ENCODE measurements at regions of chr1 and their contacts with region 1.

Region 1: GRCh38 chr1:160997323-160998038 is 23.5 kb downstream of the F11R start:
- DNase-seq: peak in 4 of 5 donors; percentile 14 to 67 (median 33)
- H3K4me3 ChIP-seq: no peak overlapping the region
- H3K4me3 Mint-ChIP-seq: no peak overlapping the region
- H3K27ac ChIP-seq: no peak overlapping the region
- H3K27ac Mint-ChIP-seq: peak overlapping the region in 7 of 8 donors; percentile 19 to 80 (median 47)
- H3K4me1 ChIP-seq: no peaks in the 10 kb centered on the region
- H3K4me1 Mint-ChIP-seq: peaks cover 4 to 6% (median 5%) of the 10 kb centered on the region in 3 donors
- H3K27me3 ChIP-seq: no peaks in the 10 kb centered on the region
- H3K27me3 Mint-ChIP-seq: no peaks in the 10 kb centered on the region

Region 2: GRCh38 chr1:161013488-161014230 is 16.2 kb after region 1 on chr1:
- CTCF ChIA-PET with region 1: interaction called, 26 read pairs
- POLR2A ChIA-PET with region 1: interaction called, 3 read pairs
- DNase-seq: peak; percentile 39 to 76 (median 60)
- H3K4me3 ChIP-seq: peak overlapping the region; percentile 65
- H3K4me3 Mint-ChIP-seq: peak overlapping the region; percentile 67 to 90 (median 84)
- H3K27ac ChIP-seq: peak overlapping the region; percentile 71
- H3K27ac Mint-ChIP-seq: peak overlapping the region; percentile 90 to 99 (median 96)
- H3K4me1 ChIP-seq: peaks cover 34% of the 10 kb centered on the region
- H3K4me1 Mint-ChIP-seq: peaks cover 21 to 46% (median 27%) of the 10 kb centered on the region in 3 donors
- H3K27me3 ChIP-seq: no peaks in the 10 kb centered on the region
- H3K27me3 Mint-ChIP-seq: no peaks in the 10 kb centered on the region

Region 3: DNA sequence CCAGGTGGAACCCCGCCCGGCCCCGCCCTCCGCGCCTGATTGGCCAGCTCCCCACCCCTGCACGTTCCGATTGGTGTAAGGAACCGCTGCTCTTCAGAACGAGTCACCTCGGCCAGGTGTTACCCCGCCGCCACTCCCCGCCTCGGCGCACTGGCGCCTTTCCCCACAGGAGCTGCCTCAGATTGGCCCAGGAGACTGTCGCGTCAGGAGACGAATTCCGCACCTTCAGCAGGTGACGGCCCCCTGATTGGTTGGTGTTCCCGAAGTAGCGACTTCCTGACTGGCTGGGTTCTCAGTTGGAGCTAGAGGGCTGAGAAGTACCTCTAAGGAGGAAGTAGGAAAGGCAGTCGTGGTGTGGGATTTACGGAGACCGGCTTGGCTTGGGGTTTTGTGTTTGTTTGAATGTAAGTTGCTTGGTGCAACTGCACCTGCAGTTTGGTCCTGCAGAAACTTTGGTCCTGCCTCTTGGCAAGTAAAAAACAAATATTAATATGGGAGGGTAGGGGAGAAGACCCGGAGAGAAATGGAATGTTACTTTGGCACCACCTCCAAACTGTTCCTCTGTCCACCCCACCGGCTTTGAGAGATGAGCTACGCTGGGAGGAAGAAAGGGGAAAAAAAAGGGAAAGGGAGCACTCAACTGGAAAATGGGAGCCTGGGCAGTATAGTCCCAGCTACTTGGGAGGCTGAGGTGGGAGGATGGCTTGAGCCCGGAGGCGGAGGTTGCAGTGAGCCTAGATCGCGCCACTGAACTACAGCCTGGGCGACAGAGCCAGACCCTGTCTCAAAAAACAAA is 23.9 kb after region 1 on chr1:
- CTCF ChIA-PET with region 1: interaction called, 26 read pairs
- POLR2A ChIA-PET with region 1: no interaction called
- DNase-seq: peak; percentile 85 to 95 (median 91)
- H3K4me3 ChIP-seq: peak overlapping the region; percentile 99
- H3K4me3 Mint-ChIP-seq: peak overlapping the region; percentile 85 to 94 (median 91)
- H3K27ac ChIP-seq: peak overlapping the region; percentile 71
- H3K27ac Mint-ChIP-seq: peak overlapping the region; percentile 66 to 97 (median 95)
- H3K4me1 ChIP-seq: peaks cover 26% of the 10 kb centered on the region
- H3K4me1 Mint-ChIP-seq: peaks cover 19 to 60% (median 40%) of the 10 kb centered on the region in 3 donors
- H3K27me3 ChIP-seq: no peaks in the 10 kb centered on the region
- H3K27me3 Mint-ChIP-seq: no peaks in the 10 kb centered on the region

Region 4: GRCh38 chr1:161032409-161032808 is 34.9 kb after region 1 on chr1:
- CTCF ChIA-PET with region 1: interaction called, 16 read pairs
- POLR2A ChIA-PET with region 1: no interaction called
- DNase-seq: no peak
- H3K4me3 ChIP-seq: no peak overlapping the region
- H3K4me3 Mint-ChIP-seq: no peak overlapping the region
- H3K27ac ChIP-seq: no peak overlapping the region
- H3K27ac Mint-ChIP-seq: no peak overlapping the region
- H3K4me1 ChIP-seq: peaks cover 4% of the 10 kb centered on the region
- H3K4me1 Mint-ChIP-seq: peaks cover 7 to 23% (median 18%) of the 10 kb centered on the region in 3 donors
- H3K27me3 ChIP-seq: no peaks in the 10 kb centered on the region
- H3K27me3 Mint-ChIP-seq: no peaks in the 10 kb centered on the region

Region 5: DNA sequence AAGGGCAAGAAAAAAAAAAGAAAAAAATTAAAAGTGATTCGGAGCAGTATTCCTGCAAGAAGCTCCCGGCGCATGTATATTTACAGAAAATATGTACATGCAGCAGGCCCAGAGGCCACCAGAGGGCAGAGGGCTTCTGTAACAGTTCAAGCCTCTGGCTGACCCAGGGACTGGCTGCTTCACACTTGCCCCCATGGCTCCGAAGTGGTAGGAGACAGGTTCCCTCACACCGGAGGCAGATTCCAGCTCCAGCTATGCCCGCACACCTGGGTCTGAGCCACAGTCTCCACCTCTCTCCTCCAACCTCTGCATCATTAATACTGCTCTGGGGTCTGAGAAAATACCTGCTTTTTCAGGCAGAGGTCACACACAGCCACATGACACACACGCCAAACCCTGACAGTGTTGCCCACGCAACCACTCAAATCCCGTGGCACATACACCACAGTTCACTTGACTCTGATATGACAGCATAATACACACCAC is 74.4 kb after region 1 on chr1:
- CTCF ChIA-PET with region 1: interaction called, 29 read pairs
- POLR2A ChIA-PET with region 1: interaction called, 3 read pairs
- DNase-seq: peak in 4 of 5 donors; percentile 24 to 66 (median 41)
- H3K4me3 ChIP-seq: no peak overlapping the region
- H3K4me3 Mint-ChIP-seq: peak overlapping the region in 1 of 7 donors; percentile 59
- H3K27ac ChIP-seq: no peak overlapping the region
- H3K27ac Mint-ChIP-seq: peak overlapping the region in 7 of 8 donors; percentile 17 to 88 (median 70)
- H3K4me1 ChIP-seq: peaks cover 34% of the 10 kb centered on the region
- H3K4me1 Mint-ChIP-seq: peaks cover 33 to 42% (median 41%) of the 10 kb centered on the region in 3 donors
- H3K27me3 ChIP-seq: no peaks in the 10 kb centered on the region
- H3K27me3 Mint-ChIP-seq: peaks cover 0 to 2% of the 10 kb centered on the region in 2 donors

Region 6: DNA sequence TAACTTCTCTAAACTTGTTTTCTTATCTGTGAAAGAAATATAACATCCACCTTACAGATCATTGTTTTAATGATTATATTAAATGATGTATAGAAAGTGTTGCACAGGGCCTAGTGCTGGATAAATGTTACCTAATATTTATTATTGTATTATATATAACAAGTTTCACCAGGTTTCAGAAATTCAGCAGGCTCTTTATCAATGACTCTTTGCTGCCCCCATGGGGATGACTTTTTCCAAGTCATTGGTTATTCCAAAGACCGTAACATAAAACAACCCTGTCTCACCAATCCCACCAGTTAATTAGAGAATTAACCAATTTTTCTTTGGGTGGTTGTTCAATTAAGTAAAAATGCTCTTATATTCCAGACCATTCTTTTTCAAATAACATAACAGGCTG is 142.3 kb after region 1 on chr1:
- CTCF ChIA-PET with region 1: interaction called, 11 read pairs
- POLR2A ChIA-PET with region 1: interaction called, 4 read pairs
- DNase-seq: peak in 2 of 5 donors; percentile 18 to 48
- H3K4me3 ChIP-seq: no peak overlapping the region
- H3K4me3 Mint-ChIP-seq: no peak overlapping the region
- H3K27ac ChIP-seq: no peak overlapping the region
- H3K27ac Mint-ChIP-seq: no peak overlapping the region
- H3K4me1 ChIP-seq: no peaks in the 10 kb centered on the region
- H3K4me1 Mint-ChIP-seq: peaks cover 4 to 8% (median 6%) of the 10 kb centered on the region in 3 donors
- H3K27me3 ChIP-seq: no peaks in the 10 kb centered on the region
- H3K27me3 Mint-ChIP-seq: no peaks in the 10 kb centered on the region